Panc1 (cell line): ENCODE measurements at regions of chr1 and their contacts with region 1.

Region 1: DNA sequence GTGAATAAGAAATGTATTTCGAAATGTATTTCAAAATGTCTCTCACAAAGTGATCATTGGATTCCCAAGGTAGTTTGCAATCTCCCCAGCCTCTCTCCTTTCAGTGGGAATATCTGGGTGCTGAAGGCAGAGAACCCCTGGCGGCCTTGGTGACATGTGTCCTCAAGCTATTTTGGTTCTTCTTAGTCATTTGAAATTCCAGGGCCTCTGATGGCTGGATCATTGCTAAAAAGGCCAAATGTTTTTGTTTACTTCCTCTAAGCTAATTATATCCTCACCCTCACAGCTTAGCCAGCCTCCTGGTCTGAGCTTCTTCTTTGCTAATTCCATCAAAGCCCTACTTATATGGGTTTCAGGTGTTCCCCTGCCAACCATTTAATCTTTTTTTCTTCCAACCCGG is 71.2 kb downstream of the LRRC40 start:
- DNase-seq: no peak
- ATAC-seq: no peak
- H3K4me3 ChIP-seq: no peak overlapping the region
- H3K27ac ChIP-seq: no peak overlapping the region
- H3K4me1 ChIP-seq: 0 out of 2 replicates have a peak, but pooled peaks cover 4% of the 10 kb centered on the region
- H3K27me3 ChIP-seq: peaks cover 4% of the 10 kb centered on the region; the same call in 1 of the 2 replicates
- CTCF ChIP-seq: no peak

Region 2: GRCh38 chr1:70205434-70206118 is 71.4 kb after region 1 on chr1 and contains the start of gene LRRC40:
- CTCF ChIA-PET with region 1: no interaction called
- POLR2A ChIA-PET with region 1: no interaction called
- in situ Hi-C with region 1: no loop called
- intact Hi-C with region 1: loop called (anchors 5 kb)
- DNase-seq: peak; percentile 74
- ATAC-seq: peak; percentile 98
- H3K4me3 ChIP-seq: peak within 1 kb of the TSS; percentile 83 to 92
- H3K27ac ChIP-seq: peak within 1 kb of the TSS; percentile 97
- H3K4me1 ChIP-seq: peaks cover 7% of the 10 kb centered on the region; the same call in 1 of the 2 replicates
- H3K27me3 ChIP-seq: no peaks in the 10 kb centered on the region
- CTCF ChIP-seq: no peak
- total RNA-seq, gene LRRC40: 15.9 TPM

Region 3: GRCh38 chr1:70542856-70543255 is 408.7 kb after region 1 on chr1:
- CTCF ChIA-PET with region 1: no interaction called
- POLR2A ChIA-PET with region 1: no interaction called
- in situ Hi-C with region 1: no loop called
- intact Hi-C with region 1: no loop called
- DNase-seq: no peak
- ATAC-seq: no peak
- H3K4me3 ChIP-seq: no peak overlapping the region
- H3K27ac ChIP-seq: no peak overlapping the region
- H3K4me1 ChIP-seq: no peaks in the 10 kb centered on the region
- H3K27me3 ChIP-seq: peaks cover 2% of the 10 kb centered on the region; the same call in 1 of the 2 replicates
- CTCF ChIP-seq: no peak